ENCODE measurements at regions of chr4 and their contacts with region 1.

Region 1: DNA sequence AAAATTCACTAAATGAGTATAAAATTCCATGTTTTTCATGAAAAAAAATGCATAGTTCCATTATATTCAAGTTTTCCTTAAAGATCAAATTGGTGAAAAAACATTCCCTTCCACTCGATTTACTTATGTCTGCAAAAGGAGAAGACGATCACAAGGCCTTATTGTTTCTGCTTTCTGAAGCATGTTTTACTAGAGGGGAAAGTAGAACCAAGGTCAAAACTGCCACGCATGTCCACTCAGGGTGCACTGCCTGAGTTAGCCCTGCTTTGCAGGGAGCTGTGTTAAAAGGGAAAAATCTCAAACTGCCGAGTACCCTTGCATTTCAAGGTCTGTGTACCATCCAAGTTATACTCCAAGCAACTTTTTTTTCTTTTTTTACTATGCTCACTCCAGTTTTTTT is 57.2 kb downstream of the TRAPPC11 start:
- DNase-seq: no peak
- ATAC-seq: no peak
- H3K4me3 ChIP-seq: no peak overlapping the region
- H3K27ac ChIP-seq: no peak overlapping the region
- H3K4me1 ChIP-seq: no peaks in the 10 kb centered on the region
- H3K27me3 ChIP-seq: no peaks in the 10 kb centered on the region
- CTCF ChIP-seq: no peak

Region 2: GRCh38 chr4:183700404-183700803 is 15.9 kb before region 1 on chr4:
- intact Hi-C with region 1: no loop called
- DNase-seq: no peak
- ATAC-seq: no peak
- H3K4me3 ChIP-seq: no peak overlapping the region
- H3K27ac ChIP-seq: no peak overlapping the region
- H3K4me1 ChIP-seq: no peaks in the 10 kb centered on the region
- H3K27me3 ChIP-seq: no peaks in the 10 kb centered on the region
- CTCF ChIP-seq: no peak

Region 3: DNA sequence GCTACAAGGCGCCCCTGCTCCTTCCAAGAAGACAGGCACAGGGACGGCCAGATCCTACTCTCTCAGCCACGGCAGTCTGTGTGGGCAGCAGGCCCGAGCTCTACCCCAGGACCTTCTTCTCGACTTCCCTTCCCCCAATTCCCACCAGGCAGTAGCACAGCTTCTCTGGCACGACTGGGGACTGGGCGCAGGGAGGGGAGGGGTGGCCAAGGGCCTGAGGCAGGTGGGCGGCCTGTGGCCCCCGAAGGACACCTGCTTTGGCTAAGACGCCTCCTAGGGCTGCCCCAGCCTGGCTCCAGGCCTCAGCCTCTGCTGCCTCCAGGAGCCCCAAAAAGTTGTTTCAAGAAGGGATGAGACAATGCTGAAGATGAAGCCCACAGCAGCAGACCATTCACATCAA is 782.3 kb after region 1 on chr4:
- intact Hi-C with region 1: loop called in 1 of 2 experiments (anchors 10 kb)
- DNase-seq: no peak
- ATAC-seq: no peak
- H3K4me3 ChIP-seq: no peak overlapping the region
- H3K27ac ChIP-seq: no peak overlapping the region
- H3K4me1 ChIP-seq: no peaks in the 10 kb centered on the region
- H3K27me3 ChIP-seq: no peaks in the 10 kb centered on the region
- CTCF ChIP-seq: no peak

Measured in psoas muscle (tissue), 8 donors.